ENCODE measurements at regions of chr19 and their contacts with region 1.

Region 1: GRCh38 chr19:38335949-38336637 is 463 bp downstream of the CATSPERG start:
- DNase-seq: peak; percentile 92
- ATAC-seq: peak; percentile 88
- H3K4me3 ChIP-seq: peak overlapping the region; percentile 77
- H3K27ac ChIP-seq: peak overlapping the region; percentile 55
- H3K4me1 ChIP-seq: no peaks in the 10 kb centered on the region
- H3K27me3 ChIP-seq: no peaks in the 10 kb centered on the region
- CTCF ChIP-seq: no peak
- POLR2A ChIP-seq: no peak; the same call in 1 of the 2 replicates
- RAD21 ChIP-seq: no peak

Region 2: DNA sequence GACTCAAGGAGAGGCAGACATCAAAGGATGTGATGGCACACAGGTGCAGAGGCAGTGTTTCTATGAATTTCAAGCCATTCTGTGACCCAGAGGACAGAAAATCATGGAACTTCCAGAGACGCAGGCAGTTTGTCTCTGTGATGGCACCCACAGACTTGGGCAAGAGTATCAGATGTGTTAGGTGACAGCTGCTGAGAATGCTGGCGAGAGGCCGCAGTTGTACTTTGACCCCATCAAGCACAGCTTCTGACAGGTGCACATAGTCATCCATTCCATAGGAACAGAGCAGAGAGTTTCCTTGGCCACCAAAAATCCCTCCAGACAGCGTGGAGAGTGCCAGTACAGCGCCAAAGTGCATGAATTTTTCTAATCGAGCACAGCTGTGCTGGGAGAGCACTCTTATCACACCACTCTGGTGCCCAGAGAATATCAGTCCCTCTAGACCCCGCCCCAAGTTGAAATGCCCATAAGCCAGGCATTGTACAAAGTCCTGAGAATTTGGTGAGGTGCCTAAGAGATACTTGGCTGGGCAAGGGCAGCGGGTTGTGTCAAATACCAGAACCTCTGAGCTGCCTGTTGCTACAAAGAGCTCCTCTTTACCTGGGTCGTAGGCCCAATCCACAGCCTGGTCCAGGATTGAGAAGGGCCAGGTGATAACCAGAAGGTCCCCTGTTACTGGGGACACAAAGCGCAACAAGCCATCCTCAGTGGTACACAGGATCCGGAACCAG is 442.1 kb before region 1 on chr19:
- CTCF ChIA-PET with region 1: no interaction called
- POLR2A ChIA-PET with region 1: no interaction called
- dilution Hi-C with region 1: no loop called
- in situ Hi-C with region 1: loop called (anchors 10 kb)
- intact Hi-C with region 1: no loop called
- DNase-seq: no peak
- ATAC-seq: no peak
- H3K4me3 ChIP-seq: no peak overlapping the region
- H3K27ac ChIP-seq: no peak overlapping the region
- H3K4me1 ChIP-seq: no peaks in the 10 kb centered on the region
- H3K27me3 ChIP-seq: peaks cover 27% of the 10 kb centered on the region
- CTCF ChIP-seq: no peak
- POLR2A ChIP-seq: no peak
- RAD21 ChIP-seq: no peak

Region 3: GRCh38 chr19:38245826-38246498 is 90.1 kb before region 1 on chr19:
- CTCF ChIA-PET with region 1: interaction called, 11 read pairs
- POLR2A ChIA-PET with region 1: no interaction called
- dilution Hi-C with region 1: no loop called
- in situ Hi-C with region 1: no loop called
- intact Hi-C with region 1: loop called (anchors 1 kb)
- DNase-seq: peak; percentile 27
- ATAC-seq: peak; percentile 75
- H3K4me3 ChIP-seq: no peak overlapping the region
- H3K27ac ChIP-seq: peak overlapping the region; percentile 83
- H3K4me1 ChIP-seq: peaks cover 7% of the 10 kb centered on the region
- H3K27me3 ChIP-seq: no peaks in the 10 kb centered on the region
- CTCF ChIP-seq: no peak
- POLR2A ChIP-seq: no peak
- RAD21 ChIP-seq: no peak